WTC11 (cell line): ENCODE measurements at regions of chr11 and their contacts with region 1.

Region 1: DNA sequence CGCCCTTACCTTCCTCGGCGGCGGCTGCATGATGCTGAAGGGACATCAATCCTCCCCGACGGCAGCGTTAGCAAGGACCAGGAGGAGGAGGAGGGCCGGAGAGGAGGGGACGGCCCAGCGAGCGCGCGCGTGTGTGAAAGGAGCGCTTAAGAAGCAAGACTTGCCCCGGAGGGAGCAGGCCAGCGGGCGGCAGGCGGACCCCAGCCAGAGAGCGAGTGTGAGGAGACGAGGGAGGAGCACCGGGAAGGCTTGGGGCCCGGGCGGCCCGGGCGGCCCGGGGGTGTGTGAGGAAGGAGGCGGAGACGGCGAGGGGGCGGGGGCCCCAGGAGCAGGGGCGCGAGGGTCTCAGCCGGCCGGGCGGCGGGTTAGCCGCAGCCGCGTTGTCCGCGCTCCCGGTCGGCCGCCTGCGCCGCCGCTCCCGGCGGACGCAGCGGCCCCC is 251 bp downstream of the FCHSD2 start:
- DNase-seq: peak; percentile 69
- ATAC-seq: peak; percentile 41
- H3K4me3 Mint-ChIP-seq: peak overlapping the region; percentile 87
- H3K27ac Mint-ChIP-seq: 0 out of 2 replicates have a peak overlapping the region, but pooled peaks have one; percentile 41
- H3K4me1 Mint-ChIP-seq: peaks cover 23% of the 10 kb centered on the region
- H3K27me3 Mint-ChIP-seq: peaks cover 19% of the 10 kb centered on the region
- CTCF ChIP-seq: no peak

Region 2: DNA sequence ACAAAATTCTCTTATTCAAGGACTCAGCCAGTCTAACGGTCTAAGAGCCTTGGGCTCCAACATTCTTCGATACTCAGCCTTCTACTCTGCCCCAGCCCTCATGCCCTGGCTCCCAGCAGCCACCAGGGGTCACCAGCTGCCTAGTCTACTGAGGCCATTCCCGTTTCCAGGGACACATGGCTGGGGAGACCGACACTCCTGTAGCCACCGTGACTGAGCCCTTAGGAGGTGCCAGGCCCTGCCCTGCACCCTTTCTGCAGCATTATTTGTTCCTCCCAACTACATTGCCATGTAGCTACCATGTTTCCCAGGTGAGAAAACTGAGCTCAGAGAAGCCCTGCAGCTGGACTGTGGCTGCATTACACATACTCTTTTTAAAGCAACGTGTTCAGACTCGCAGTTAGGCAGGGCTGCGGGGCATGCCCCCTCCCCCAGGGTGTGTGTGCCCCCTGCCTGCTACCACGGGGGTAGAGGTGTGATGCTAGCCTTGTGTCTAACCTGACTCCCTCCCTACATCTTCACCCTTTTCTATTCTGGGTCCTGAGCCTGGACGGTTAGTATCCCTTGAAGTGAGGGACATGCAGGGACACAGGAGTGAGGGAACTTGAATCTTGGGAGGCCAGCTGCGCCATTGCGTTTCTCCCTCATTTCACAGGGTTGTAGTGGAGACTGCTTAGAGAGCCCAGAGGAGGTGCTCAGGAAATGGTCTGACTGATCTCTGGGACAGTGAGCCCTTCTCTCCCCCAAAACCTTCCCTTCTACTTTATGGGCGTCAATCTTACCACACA is 310.2 kb before region 1 on chr11:
- CTCF ChIA-PET with region 1: interaction called, 10 read pairs
- POLR2A ChIA-PET with region 1: no interaction called
- DNase-seq: peak; percentile 90
- ATAC-seq: peak; percentile 97
- H3K4me3 Mint-ChIP-seq: no peak overlapping the region
- H3K27ac Mint-ChIP-seq: no peak overlapping the region
- H3K4me1 Mint-ChIP-seq: peaks cover 9% of the 10 kb centered on the region
- H3K27me3 Mint-ChIP-seq: peaks cover 6% of the 10 kb centered on the region
- CTCF ChIP-seq: peak; percentile 59

Region 3: GRCh38 chr11:73124800-73125199 is 17.1 kb before region 1 on chr11:
- CTCF ChIA-PET with region 1: interaction called, 13 read pairs
- POLR2A ChIA-PET with region 1: interaction called, 3 read pairs
- DNase-seq: no peak
- ATAC-seq: no peak
- H3K4me3 Mint-ChIP-seq: no peak overlapping the region
- H3K27ac Mint-ChIP-seq: no peak overlapping the region; the same call in 1 of the 2 replicates
- H3K4me1 Mint-ChIP-seq: 0 out of 2 replicates have a peak, but pooled peaks cover 6% of the 10 kb centered on the region
- H3K27me3 Mint-ChIP-seq: no peaks in the 10 kb centered on the region
- CTCF ChIP-seq: no peak

Region 4: DNA sequence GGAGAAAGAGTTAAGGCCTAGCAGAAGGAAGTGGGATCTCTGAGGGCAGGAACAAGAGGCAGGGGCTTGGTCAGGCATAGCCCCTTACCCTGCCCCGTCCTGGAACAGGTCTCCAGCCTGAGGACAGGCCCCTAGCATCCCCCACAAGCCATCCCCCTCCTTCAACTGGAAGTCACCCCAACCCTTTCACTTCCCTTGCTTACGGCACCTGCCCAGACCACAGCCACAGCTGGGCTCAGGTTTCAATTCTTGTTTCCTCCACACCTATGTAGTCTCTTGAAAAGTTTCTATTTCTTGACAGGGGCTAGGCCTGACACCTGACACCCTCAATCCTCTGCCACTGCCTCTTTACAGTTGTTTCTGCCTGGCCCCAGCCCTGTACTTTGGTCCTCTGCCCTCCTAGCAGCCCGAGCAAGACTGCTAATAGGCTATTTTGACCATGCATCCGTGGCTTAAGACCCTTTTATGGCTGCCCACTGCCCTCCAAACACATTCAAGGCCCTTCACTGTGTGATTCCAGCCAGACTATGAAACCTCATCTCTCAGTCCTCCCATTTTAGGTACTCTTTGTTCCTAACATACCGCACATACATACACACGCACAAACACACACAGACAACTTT is 11.1 kb after region 1 on chr11:
- CTCF ChIA-PET with region 1: interaction called, 21 read pairs
- POLR2A ChIA-PET with region 1: interaction called, 3 read pairs
- DNase-seq: peak; percentile 29
- ATAC-seq: peak; percentile 93
- H3K4me3 Mint-ChIP-seq: no peak overlapping the region
- H3K27ac Mint-ChIP-seq: peak overlapping the region; percentile 1
- H3K4me1 Mint-ChIP-seq: peaks cover 21% of the 10 kb centered on the region
- H3K27me3 Mint-ChIP-seq: no peaks in the 10 kb centered on the region; the same call in 1 of the 2 replicates
- CTCF ChIP-seq: no peak

Region 5: GRCh38 chr11:73164803-73165540 is 23.1 kb after region 1 on chr11:
- CTCF ChIA-PET with region 1: interaction called, 13 read pairs
- POLR2A ChIA-PET with region 1: interaction called, 4 read pairs
- DNase-seq: no peak
- ATAC-seq: no peak
- H3K4me3 Mint-ChIP-seq: no peak overlapping the region
- H3K27ac Mint-ChIP-seq: no peak overlapping the region
- H3K4me1 Mint-ChIP-seq: peaks cover 18% of the 10 kb centered on the region
- H3K27me3 Mint-ChIP-seq: no peaks in the 10 kb centered on the region; the same call in none of the 2 replicates
- CTCF ChIP-seq: no peak

Region 6: GRCh38 chr11:73170140-73170539 is 28.3 kb after region 1 on chr11:
- CTCF ChIA-PET with region 1: interaction called, 13 read pairs
- POLR2A ChIA-PET with region 1: interaction called, 4 read pairs
- DNase-seq: no peak
- ATAC-seq: no peak
- H3K4me3 Mint-ChIP-seq: no peak overlapping the region
- H3K27ac Mint-ChIP-seq: no peak overlapping the region
- H3K4me1 Mint-ChIP-seq: peaks cover 15% of the 10 kb centered on the region
- H3K27me3 Mint-ChIP-seq: no peaks in the 10 kb centered on the region; the same call in 1 of the 2 replicates
- CTCF ChIP-seq: no peak

Region 7: GRCh38 chr11:73177778-73178577 is 36.1 kb after region 1 on chr11:
- CTCF ChIA-PET with region 1: interaction called, 55 read pairs
- POLR2A ChIA-PET with region 1: interaction called, 3 read pairs
- DNase-seq: peak; percentile 83
- ATAC-seq: peak; percentile 97
- H3K4me3 Mint-ChIP-seq: no peak overlapping the region
- H3K27ac Mint-ChIP-seq: no peak overlapping the region
- H3K4me1 Mint-ChIP-seq: no peaks in the 10 kb centered on the region
- H3K27me3 Mint-ChIP-seq: no peaks in the 10 kb centered on the region; the same call in 1 of the 2 replicates
- CTCF ChIP-seq: peak; percentile 66